ENCODE measurements at regions of chr10 and their contacts with region 1.

Region 1: GRCh38 chr10:52313933-52314816 is at the start of gene DKK1:
- DNase-seq: peak; percentile 88
- ATAC-seq: peak; percentile 85
- H3K4me3 Mint-ChIP-seq: peak within 1 kb of the TSS; percentile 85
- H3K27ac Mint-ChIP-seq: no peak within 1 kb of the TSS
- H3K4me1 Mint-ChIP-seq: peaks cover 15% of the 10 kb centered on the region
- H3K27me3 Mint-ChIP-seq: peaks cover 94% of the 10 kb centered on the region
- CTCF ChIP-seq: peak; percentile 87
- total RNA-seq, gene DKK1: 0.78 to 1.1 TPM (median 1.0 TPM) in 3 replicates

Region 2: GRCh38 chr10:52198540-52198939 is 115.6 kb before region 1 on chr10:
- CTCF ChIA-PET with region 1: no interaction called
- POLR2A ChIA-PET with region 1: no interaction called
- DNase-seq: no peak
- ATAC-seq: no peak
- H3K4me3 Mint-ChIP-seq: no peak overlapping the region
- H3K27ac Mint-ChIP-seq: no peak overlapping the region
- H3K4me1 Mint-ChIP-seq: 0 out of 2 replicates have a peak, but pooled peaks cover 2% of the 10 kb centered on the region
- H3K27me3 Mint-ChIP-seq: no peaks in the 10 kb centered on the region
- CTCF ChIP-seq: no peak

Region 3: GRCh38 chr10:52215745-52216361 is 98.3 kb before region 1 on chr10:
- CTCF ChIA-PET with region 1: no interaction called
- POLR2A ChIA-PET with region 1: no interaction called
- DNase-seq: no peak
- ATAC-seq: peak; percentile 35
- H3K4me3 Mint-ChIP-seq: no peak overlapping the region
- H3K27ac Mint-ChIP-seq: no peak overlapping the region
- H3K4me1 Mint-ChIP-seq: peaks cover 69% of the 10 kb centered on the region
- H3K27me3 Mint-ChIP-seq: no peaks in the 10 kb centered on the region
- CTCF ChIP-seq: peak; percentile 85

Region 4: DNA sequence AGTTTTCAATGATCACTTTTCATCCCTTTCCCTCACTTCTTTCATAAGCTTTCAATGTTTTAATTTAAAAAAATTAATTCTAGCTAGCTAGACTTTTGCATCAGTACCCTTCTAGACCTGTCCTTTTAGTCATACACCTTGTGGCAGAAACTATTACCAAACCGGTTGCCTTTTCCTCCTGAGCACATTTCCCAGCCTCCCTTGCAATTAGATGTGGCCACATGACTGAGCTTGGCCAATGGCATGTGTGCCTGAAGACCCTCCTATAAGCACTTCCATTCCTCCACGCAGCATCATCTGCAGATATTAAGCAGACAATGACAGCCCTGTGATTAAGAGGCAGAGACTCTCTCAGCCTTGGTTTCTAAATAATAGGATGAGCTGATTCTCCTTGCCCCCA is 12.2 kb after region 1 on chr10:
- CTCF ChIA-PET with region 1: interaction called, 20 read pairs
- POLR2A ChIA-PET with region 1: no interaction called
- DNase-seq: no peak
- ATAC-seq: peak; percentile 52; the same call in 1 of the 2 replicates
- H3K4me3 Mint-ChIP-seq: no peak overlapping the region
- H3K27ac Mint-ChIP-seq: no peak overlapping the region
- H3K4me1 Mint-ChIP-seq: no peaks in the 10 kb centered on the region
- H3K27me3 Mint-ChIP-seq: peaks cover 3% of the 10 kb centered on the region; the same call in 1 of the 2 replicates
- CTCF ChIP-seq: no peak

Region 5: DNA sequence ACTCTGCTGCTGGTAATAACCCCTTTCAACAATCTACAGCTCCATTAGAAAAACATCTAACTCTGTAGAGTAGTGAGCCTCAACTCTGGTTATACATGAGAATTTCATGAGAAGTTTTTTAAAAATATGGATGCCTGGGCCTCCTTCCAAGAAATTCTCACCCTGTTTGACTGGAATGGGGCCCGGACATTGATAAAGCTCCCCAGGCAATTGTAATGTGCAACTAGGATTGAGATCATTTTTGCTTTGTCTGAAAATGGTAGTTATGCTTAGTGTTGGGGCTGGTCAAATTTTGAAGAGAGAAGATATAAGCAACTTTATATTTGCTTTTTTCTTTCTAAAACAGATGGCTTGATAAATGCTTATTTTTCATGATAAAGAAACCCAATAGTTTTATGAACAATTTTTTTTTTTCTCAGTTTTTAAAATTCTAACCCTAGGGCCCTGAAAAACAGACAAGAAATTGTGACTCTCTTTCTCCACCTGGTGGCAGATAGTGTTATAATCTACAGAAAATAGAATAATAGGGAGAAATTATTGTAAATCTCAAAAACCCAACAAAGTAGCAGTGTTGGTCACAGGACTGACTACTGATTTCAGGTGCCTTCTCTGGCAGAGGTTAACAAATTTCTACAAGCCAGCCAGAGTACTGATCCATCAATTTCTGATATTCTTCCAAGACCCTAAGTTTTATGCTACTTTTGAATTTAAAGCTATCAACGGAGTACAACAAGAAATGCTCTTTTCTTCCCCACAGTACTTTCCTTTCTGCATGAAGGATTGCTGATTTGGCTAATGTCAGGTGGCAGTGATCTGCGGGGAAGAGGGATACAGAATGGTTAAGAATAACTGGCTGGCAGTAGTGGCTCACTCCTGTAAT is 174.7 kb after region 1 on chr10:
- CTCF ChIA-PET with region 1: interaction called, 19 read pairs
- POLR2A ChIA-PET with region 1: no interaction called
- DNase-seq: no peak
- ATAC-seq: no peak
- H3K4me3 Mint-ChIP-seq: no peak overlapping the region
- H3K27ac Mint-ChIP-seq: no peak overlapping the region
- H3K4me1 Mint-ChIP-seq: no peaks in the 10 kb centered on the region
- H3K27me3 Mint-ChIP-seq: no peaks in the 10 kb centered on the region; the same call in 1 of the 2 replicates
- CTCF ChIP-seq: peak; percentile 35; the same call in 1 of the 2 replicates